ENCODE measurements at regions of chr2 and their contacts with region 1.

Region 1: GRCh38 chr2:112811841-112812306 is 24.7 kb downstream of the IL1B start:
- DNase-seq: peak; percentile 58
- H3K4me3 Mint-ChIP-seq: no peak overlapping the region
- H3K27ac Mint-ChIP-seq: peak overlapping the region; percentile 68
- H3K4me1 Mint-ChIP-seq: peaks cover 41% of the 10 kb centered on the region
- H3K27me3 Mint-ChIP-seq: no peaks in the 10 kb centered on the region

Region 2: GRCh38 chr2:112794131-112794733 is 17.6 kb before region 1 on chr2:
- CTCF ChIA-PET with region 1: no interaction called
- POLR2A ChIA-PET with region 1: interaction called, 3 read pairs
- intact Hi-C with region 1: loop called (anchors 1 kb)
- DNase-seq: peak; percentile 74
- H3K4me3 Mint-ChIP-seq: peak overlapping the region; percentile 18
- H3K27ac Mint-ChIP-seq: peak overlapping the region; percentile 85
- H3K4me1 Mint-ChIP-seq: peaks cover 27% of the 10 kb centered on the region
- H3K27me3 Mint-ChIP-seq: no peaks in the 10 kb centered on the region